ENCODE measurements at regions of chr12 and their contacts with region 1.

Region 1: DNA sequence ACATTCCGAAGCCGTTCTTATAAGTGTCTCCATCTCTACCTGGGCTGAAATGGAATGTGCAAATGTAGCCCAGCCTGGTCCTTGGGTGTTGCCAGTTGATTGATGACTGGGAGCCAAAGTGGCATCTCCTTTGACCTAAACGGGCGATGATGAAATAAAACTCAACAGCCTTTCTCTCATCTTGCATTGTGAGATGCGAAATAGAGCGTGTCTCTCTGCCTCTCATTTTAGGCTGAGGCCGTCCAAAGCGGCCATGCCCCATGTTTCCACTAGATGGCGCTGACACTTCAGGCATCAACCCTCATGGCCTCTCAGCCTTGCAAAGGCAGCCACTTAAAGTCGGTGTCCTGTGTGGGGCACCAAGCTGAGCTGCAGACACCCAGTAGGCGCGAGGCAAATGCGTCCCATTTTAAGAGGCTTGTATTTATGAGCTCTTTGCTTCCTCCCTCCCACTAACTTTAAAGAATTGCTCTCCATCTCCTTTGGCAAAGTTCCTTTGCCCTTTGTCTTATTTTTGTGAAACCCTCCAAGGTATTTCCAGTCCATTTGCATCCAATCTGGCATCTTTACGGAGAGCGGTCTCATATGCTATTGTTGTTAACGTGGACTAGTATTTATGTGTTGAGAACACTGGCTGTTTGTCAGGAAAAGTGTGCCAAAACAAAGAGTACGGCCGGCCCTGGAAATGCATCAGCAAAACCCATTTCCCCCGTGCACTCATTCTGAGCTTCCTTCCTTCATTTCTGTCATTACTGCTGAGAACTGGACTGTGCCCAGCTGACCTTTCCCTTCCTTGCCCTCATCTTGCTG is 25.0 kb downstream of the GPRC5A start:
- DNase-seq: peak; percentile 73
- ATAC-seq: peak; percentile 99
- H3K4me3 Mint-ChIP-seq: no peak overlapping the region
- H3K27ac Mint-ChIP-seq: no peak overlapping the region
- H3K4me1 Mint-ChIP-seq: peaks cover 8% of the 10 kb centered on the region
- H3K27me3 Mint-ChIP-seq: peaks cover 16% of the 10 kb centered on the region
- CTCF ChIP-seq: peak; percentile 86

Region 2: GRCh38 chr12:12859690-12860089 is 56.6 kb before region 1 on chr12:
- CTCF ChIA-PET with region 1: no interaction called
- POLR2A ChIA-PET with region 1: no interaction called
- intact Hi-C with region 1: no loop called
- DNase-seq: no peak
- ATAC-seq: no peak
- H3K4me3 Mint-ChIP-seq: no peak overlapping the region
- H3K27ac Mint-ChIP-seq: no peak overlapping the region
- H3K4me1 Mint-ChIP-seq: peaks cover 4% of the 10 kb centered on the region
- H3K27me3 Mint-ChIP-seq: no peaks in the 10 kb centered on the region
- CTCF ChIP-seq: no peak

Region 3: DNA sequence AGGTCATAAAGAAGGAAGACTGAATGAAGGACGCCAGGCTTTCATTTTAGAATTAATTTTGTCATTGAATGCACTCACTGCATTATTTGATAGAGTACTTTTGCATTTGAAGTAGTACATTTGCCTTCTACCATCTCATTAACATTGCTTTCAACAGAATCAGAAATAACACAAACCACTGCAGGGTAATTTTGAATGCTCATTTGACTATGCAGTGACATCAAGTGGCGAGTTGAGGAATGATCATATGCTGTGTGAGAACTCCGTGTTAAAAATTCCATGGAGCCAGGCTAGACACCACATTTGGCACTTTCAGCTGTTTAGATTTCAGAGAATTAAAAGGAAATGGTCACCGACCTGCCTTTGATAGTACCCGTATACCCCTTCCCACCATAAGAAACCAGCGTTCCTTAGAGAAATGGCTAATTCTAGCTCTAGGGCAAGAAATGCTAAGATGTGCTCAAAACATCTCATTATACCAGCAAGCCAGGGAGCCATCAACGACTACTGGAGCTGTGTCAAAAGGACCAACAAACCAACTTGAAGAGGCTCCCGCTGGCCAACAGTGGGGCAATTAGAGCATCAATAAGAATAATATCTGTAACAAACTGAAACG is 67.2 kb after region 1 on chr12:
- CTCF ChIA-PET with region 1: interaction called, 4 read pairs
- POLR2A ChIA-PET with region 1: no interaction called
- intact Hi-C with region 1: loop called (anchors 2 kb)
- DNase-seq: no peak
- ATAC-seq: no peak
- H3K4me3 Mint-ChIP-seq: no peak overlapping the region
- H3K27ac Mint-ChIP-seq: no peak overlapping the region
- H3K4me1 Mint-ChIP-seq: no peaks in the 10 kb centered on the region
- H3K27me3 Mint-ChIP-seq: no peaks in the 10 kb centered on the region
- CTCF ChIP-seq: no peak

Region 4: GRCh38 chr12:13023811-13024530 is 107.6 kb after region 1 on chr12:
- CTCF ChIA-PET with region 1: interaction called, 6 read pairs
- POLR2A ChIA-PET with region 1: no interaction called
- intact Hi-C with region 1: loop called (anchors 1 kb)
- DNase-seq: no peak
- ATAC-seq: no peak
- H3K4me3 Mint-ChIP-seq: no peak overlapping the region
- H3K27ac Mint-ChIP-seq: no peak overlapping the region
- H3K4me1 Mint-ChIP-seq: no peaks in the 10 kb centered on the region
- H3K27me3 Mint-ChIP-seq: peaks cover 26% of the 10 kb centered on the region
- CTCF ChIP-seq: no peak

Region 5: DNA sequence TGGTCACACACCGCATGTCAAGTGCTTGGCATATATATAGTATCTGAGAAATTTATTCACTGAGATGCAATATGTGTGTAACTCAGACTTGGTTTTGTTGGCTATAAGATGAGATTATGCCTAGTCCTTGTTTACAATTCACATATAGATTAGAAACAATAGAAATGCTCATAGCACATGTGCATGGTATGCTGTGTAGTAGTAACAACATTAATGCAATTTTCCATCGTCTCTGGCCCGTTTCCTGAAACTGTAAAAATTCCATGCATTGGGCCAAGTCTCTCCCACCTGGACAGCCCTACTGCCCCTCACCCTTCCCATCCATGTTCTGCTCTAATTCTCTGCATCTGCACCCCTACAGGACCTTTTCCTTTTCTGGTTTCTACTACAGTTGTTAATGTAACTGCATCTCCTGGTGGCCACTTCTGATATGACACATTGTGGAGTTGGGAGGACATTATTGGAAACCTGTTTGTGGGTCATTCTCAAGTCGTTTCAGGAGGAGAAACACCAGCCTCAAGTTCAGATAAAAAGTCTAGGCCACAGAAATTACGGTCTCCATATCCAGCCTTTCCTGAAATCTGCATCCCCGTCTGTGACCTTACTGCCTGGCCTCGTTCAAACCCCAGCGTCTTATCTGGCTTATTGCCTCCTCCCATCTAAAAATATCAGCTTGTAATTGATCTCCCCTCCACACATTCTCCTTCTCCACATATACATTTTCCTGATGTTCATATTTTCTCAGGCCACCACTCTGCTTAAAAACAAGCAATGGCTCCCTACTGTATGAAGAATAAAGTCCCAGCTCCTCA is 317.7 kb after region 1 on chr12:
- CTCF ChIA-PET with region 1: interaction called, 5 read pairs
- POLR2A ChIA-PET with region 1: no interaction called
- intact Hi-C with region 1: loop called (anchors 1 kb)
- DNase-seq: no peak
- ATAC-seq: no peak
- H3K4me3 Mint-ChIP-seq: no peak overlapping the region
- H3K27ac Mint-ChIP-seq: no peak overlapping the region
- H3K4me1 Mint-ChIP-seq: no peaks in the 10 kb centered on the region
- H3K27me3 Mint-ChIP-seq: peaks cover 1% of the 10 kb centered on the region
- CTCF ChIP-seq: peak; percentile 26

Region 6: GRCh38 chr12:13661005-13661887 is 744.9 kb after region 1 on chr12:
- CTCF ChIA-PET with region 1: no interaction called
- POLR2A ChIA-PET with region 1: no interaction called
- intact Hi-C with region 1: loop called (anchors 1 kb)
- DNase-seq: no peak
- ATAC-seq: peak; percentile 58
- H3K4me3 Mint-ChIP-seq: no peak overlapping the region
- H3K27ac Mint-ChIP-seq: no peak overlapping the region
- H3K4me1 Mint-ChIP-seq: no peaks in the 10 kb centered on the region
- H3K27me3 Mint-ChIP-seq: no peaks in the 10 kb centered on the region
- CTCF ChIP-seq: peak; percentile 68